A673 (cell line): ENCODE measurements at regions of chrX and their contacts with region 1.

Region 1: DNA sequence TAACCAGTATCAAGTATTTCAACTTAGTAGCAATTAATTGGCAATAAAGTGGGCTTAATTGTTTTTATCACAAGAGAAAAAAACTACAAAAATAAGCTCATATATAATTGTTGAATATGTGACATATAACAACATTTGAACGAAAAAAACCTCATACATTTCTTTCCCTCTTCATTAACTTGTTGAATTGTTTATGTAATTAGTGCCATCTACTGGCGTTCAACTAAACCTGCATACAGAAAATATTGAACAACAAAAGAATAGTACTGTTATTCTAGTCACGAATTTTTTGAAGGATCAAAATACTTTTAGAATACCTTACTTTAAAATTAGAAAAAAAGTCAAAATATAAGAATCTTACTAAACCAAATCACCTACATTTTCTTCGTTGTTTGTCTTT is 586.5 kb upstream of the FTHL17 start:
- DNase-seq: peak; percentile 55
- H3K4me3 ChIP-seq: no peak overlapping the region
- H3K27ac ChIP-seq: no peak overlapping the region
- H3K4me1 ChIP-seq: no peaks in the 10 kb centered on the region
- H3K27me3 ChIP-seq: peaks cover 15% of the 10 kb centered on the region
- CTCF ChIP-seq: peak; percentile 66

Region 2: DNA sequence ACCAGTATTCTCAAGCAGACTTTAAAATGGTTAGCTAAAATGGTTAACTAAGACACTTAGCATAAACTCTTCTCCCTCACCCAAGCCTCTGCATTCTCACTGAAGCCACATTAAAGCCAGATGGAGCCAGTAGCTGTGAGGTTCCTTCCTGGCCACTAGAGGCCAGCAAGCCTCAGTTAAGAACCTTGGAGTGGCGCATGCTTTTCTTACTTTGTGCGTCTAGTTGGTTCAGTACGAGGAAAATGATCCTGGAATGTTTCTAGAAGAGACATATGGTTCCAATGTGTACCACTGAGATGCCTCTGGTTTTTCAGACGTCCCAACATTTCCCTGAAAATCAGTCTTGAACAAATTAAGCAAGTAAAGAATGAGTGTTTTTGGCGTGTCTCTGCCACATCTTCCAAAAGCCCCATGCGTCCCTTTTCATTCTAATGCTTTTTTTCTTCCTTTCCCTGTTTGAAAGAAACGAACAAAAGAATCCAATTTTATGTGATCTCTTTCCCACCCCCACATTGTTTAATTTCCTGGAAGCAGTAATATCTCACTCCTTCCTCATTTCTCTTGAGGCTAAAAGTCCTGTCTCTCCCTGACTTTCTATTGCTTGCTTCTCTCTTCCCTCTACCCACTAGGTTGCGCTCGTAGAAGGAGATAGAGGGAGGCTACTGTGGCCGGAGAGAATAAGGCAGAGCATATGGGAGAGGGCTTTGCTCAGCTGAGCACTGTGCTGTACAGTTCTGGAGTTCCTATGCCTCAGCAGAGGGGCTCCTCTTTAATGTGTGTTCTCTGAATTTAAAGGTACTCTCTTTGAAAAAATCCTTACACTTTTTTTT is 686.4 kb before region 1 on chrX:
- CTCF ChIA-PET with region 1: no interaction called
- POLR2A ChIA-PET with region 1: no interaction called
- intact Hi-C with region 1: loop called (anchors 5 kb)
- DNase-seq: peak; percentile 66
- H3K4me3 ChIP-seq: peak overlapping the region; percentile 14
- H3K27ac ChIP-seq: no peak overlapping the region
- H3K4me1 ChIP-seq: no peaks in the 10 kb centered on the region
- H3K27me3 ChIP-seq: no peaks in the 10 kb centered on the region
- CTCF ChIP-seq: peak; percentile 80

Region 3: GRCh38 chrX:31213941-31214340 is 444.4 kb before region 1 on chrX:
- CTCF ChIA-PET with region 1: no interaction called
- POLR2A ChIA-PET with region 1: no interaction called
- intact Hi-C with region 1: loop called (anchors 5 kb)
- DNase-seq: peak; percentile 27
- H3K4me3 ChIP-seq: no peak overlapping the region
- H3K27ac ChIP-seq: no peak overlapping the region
- H3K4me1 ChIP-seq: no peaks in the 10 kb centered on the region
- H3K27me3 ChIP-seq: no peaks in the 10 kb centered on the region
- CTCF ChIP-seq: peak; percentile 62

Region 4: GRCh38 chrX:31279359-31279758 is 379.0 kb before region 1 on chrX:
- CTCF ChIA-PET with region 1: no interaction called
- POLR2A ChIA-PET with region 1: no interaction called
- intact Hi-C with region 1: loop called (anchors 10 kb)
- DNase-seq: peak; percentile 19
- H3K4me3 ChIP-seq: no peak overlapping the region
- H3K27ac ChIP-seq: no peak overlapping the region
- H3K4me1 ChIP-seq: no peaks in the 10 kb centered on the region
- H3K27me3 ChIP-seq: no peaks in the 10 kb centered on the region
- CTCF ChIP-seq: peak; percentile 50

Region 5: GRCh38 chrX:31423609-31424189 is 234.7 kb before region 1 on chrX:
- CTCF ChIA-PET with region 1: no interaction called
- POLR2A ChIA-PET with region 1: no interaction called
- intact Hi-C with region 1: loop called (anchors 5 kb)
- DNase-seq: peak; percentile 79
- H3K4me3 ChIP-seq: no peak overlapping the region
- H3K27ac ChIP-seq: no peak overlapping the region
- H3K4me1 ChIP-seq: no peaks in the 10 kb centered on the region
- H3K27me3 ChIP-seq: no peaks in the 10 kb centered on the region
- CTCF ChIP-seq: peak; percentile 64

Region 6: GRCh38 chrX:31776696-31777095 is 118.3 kb after region 1 on chrX:
- CTCF ChIA-PET with region 1: no interaction called
- POLR2A ChIA-PET with region 1: no interaction called
- intact Hi-C with region 1: no loop called
- DNase-seq: no peak
- H3K4me3 ChIP-seq: no peak overlapping the region
- H3K27ac ChIP-seq: no peak overlapping the region
- H3K4me1 ChIP-seq: no peaks in the 10 kb centered on the region
- H3K27me3 ChIP-seq: no peaks in the 10 kb centered on the region
- CTCF ChIP-seq: no peak

Region 7: GRCh38 chrX:32116047-32116446 is 457.7 kb after region 1 on chrX:
- CTCF ChIA-PET with region 1: no interaction called
- POLR2A ChIA-PET with region 1: no interaction called
- intact Hi-C with region 1: loop called (anchors 10 kb)
- DNase-seq: peak; percentile 12
- H3K4me3 ChIP-seq: no peak overlapping the region
- H3K27ac ChIP-seq: no peak overlapping the region
- H3K4me1 ChIP-seq: no peaks in the 10 kb centered on the region
- H3K27me3 ChIP-seq: no peaks in the 10 kb centered on the region
- CTCF ChIP-seq: peak; percentile 46